ENCODE measurements at regions of chr7 and their contacts with region 1.

Region 1: GRCh38 chr7:143214789-143215679 is 6.8 kb upstream of the TAS2R40 start:
- DNase-seq: peak; percentile 77
- H3K4me3 ChIP-seq: no peak overlapping the region; a peak in 1 of 4 replicates
- H3K27ac ChIP-seq: no peak overlapping the region
- H3K4me1 ChIP-seq: no peaks in the 10 kb centered on the region
- H3K27me3 ChIP-seq: peaks cover 7% of the 10 kb centered on the region; the same call in 1 of the 2 replicates
- CTCF ChIP-seq: peak; percentile 100
- EP300 ChIP-seq: no peak
- RAD21 ChIP-seq: peak; percentile 100

Region 2: GRCh38 chr7:142516038-142516501 is 699.0 kb before region 1 on chr7:
- CTCF ChIA-PET with region 1: interaction called, 12 read pairs
- POLR2A ChIA-PET with region 1: no interaction called
- DNase-seq: peak; percentile 69
- H3K4me3 ChIP-seq: peak overlapping the region in 1 of 2 experiments; percentile 20; a peak in 1 of 4 replicates
- H3K27ac ChIP-seq: no peak overlapping the region; a peak in 1 of 4 replicates
- H3K4me1 ChIP-seq: peaks cover 0 to 18% of the 10 kb centered on the region in 2 experiments; a peak in 2 of 4 replicates
- H3K27me3 ChIP-seq: peaks cover 33% of the 10 kb centered on the region
- CTCF ChIP-seq: peak; percentile 96
- EP300 ChIP-seq: no peak
- RAD21 ChIP-seq: peak; percentile 85

Region 3: GRCh38 chr7:142587578-142588191 is 627.3 kb before region 1 on chr7:
- CTCF ChIA-PET with region 1: no interaction called
- POLR2A ChIA-PET with region 1: no interaction called
- DNase-seq: peak; percentile 31
- H3K4me3 ChIP-seq: no peak overlapping the region; a peak in 1 of 4 replicates
- H3K27ac ChIP-seq: no peak overlapping the region
- H3K4me1 ChIP-seq: peaks cover 0 to 6% of the 10 kb centered on the region in 2 experiments; a peak in 3 of 4 replicates
- H3K27me3 ChIP-seq: no peaks in the 10 kb centered on the region
- CTCF ChIP-seq: peak; percentile 64
- EP300 ChIP-seq: no peak
- RAD21 ChIP-seq: peak; percentile 40; the same call in 1 of the 2 replicates

Region 4: GRCh38 chr7:142853739-142854371 is 361.2 kb before region 1 on chr7:
- CTCF ChIA-PET with region 1: interaction called, 10 read pairs
- POLR2A ChIA-PET with region 1: no interaction called
- DNase-seq: peak; percentile 92
- H3K4me3 ChIP-seq: peak overlapping the region; percentile 61 to 89
- H3K27ac ChIP-seq: no peak overlapping the region; a peak in 1 of 4 replicates
- H3K4me1 ChIP-seq: peaks cover 0 to 14% of the 10 kb centered on the region in 2 experiments; a peak in 1 of 4 replicates
- H3K27me3 ChIP-seq: peaks cover 42% of the 10 kb centered on the region; the same call in 1 of the 2 replicates
- CTCF ChIP-seq: peak; percentile 96
- EP300 ChIP-seq: no peak
- RAD21 ChIP-seq: peak; percentile 81

Region 5: DNA sequence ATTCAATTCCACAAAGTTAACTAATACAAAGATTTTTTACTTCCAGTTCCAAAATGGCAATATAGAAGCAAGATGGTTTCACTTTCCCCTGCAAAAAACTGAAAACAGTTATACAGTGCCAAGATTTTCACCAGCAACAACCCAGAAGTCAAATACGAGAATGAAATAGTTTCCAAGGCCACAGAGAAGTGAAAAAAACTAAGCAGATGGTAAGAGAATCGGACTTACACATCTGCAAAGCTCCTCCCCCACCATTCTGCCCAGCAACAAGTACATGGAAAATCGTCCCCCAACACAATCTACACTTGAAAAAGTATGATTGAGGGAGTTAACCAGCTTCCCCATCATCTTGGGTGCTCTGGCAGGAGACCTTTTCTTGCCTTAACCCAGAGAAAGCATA is 222.6 kb before region 1 on chr7:
- CTCF ChIA-PET with region 1: interaction called, 450 read pairs
- POLR2A ChIA-PET with region 1: no interaction called
- DNase-seq: no peak
- H3K4me3 ChIP-seq: peak overlapping the region; percentile 10 to 48; a peak in 2 of 4 replicates
- H3K27ac ChIP-seq: no peak overlapping the region
- H3K4me1 ChIP-seq: no peaks in the 10 kb centered on the region
- H3K27me3 ChIP-seq: no peaks in the 10 kb centered on the region; the same call in 1 of the 2 replicates
- CTCF ChIP-seq: no peak
- EP300 ChIP-seq: no peak
- RAD21 ChIP-seq: no peak

Region 6: DNA sequence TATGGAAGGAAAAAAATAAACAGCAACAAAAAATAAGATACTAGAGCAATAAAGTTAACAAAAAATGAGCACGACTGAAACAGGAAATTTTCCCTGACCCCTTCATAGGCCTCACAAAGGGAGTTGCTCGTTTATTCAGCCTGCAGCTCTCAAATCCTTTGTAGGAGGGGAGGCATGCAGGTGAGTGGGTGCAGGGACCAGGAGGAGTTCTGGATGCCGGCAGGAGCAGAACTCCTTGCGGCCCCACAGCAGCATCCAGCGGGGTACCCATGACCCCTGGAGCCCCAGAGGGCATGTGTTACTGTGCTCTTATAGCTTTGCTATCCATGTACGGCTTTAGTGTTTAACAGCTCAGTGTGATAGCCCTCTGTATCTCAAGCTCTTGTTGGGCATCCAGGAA is 26.0 kb before region 1 on chr7:
- CTCF ChIA-PET with region 1: interaction called, 24 read pairs
- POLR2A ChIA-PET with region 1: no interaction called
- DNase-seq: no peak
- H3K4me3 ChIP-seq: no peak overlapping the region
- H3K27ac ChIP-seq: no peak overlapping the region
- H3K4me1 ChIP-seq: no peaks in the 10 kb centered on the region
- H3K27me3 ChIP-seq: peaks cover 4% of the 10 kb centered on the region; the same call in 1 of the 2 replicates
- CTCF ChIP-seq: no peak
- EP300 ChIP-seq: no peak
- RAD21 ChIP-seq: no peak

Region 7: GRCh38 chr7:143229054-143229790 is 14.2 kb after region 1 on chr7:
- CTCF ChIA-PET with region 1: interaction called, 33 read pairs
- POLR2A ChIA-PET with region 1: no interaction called
- DNase-seq: peak; percentile 17
- H3K4me3 ChIP-seq: no peak overlapping the region
- H3K27ac ChIP-seq: no peak overlapping the region
- H3K4me1 ChIP-seq: peaks cover 2 to 4% of the 10 kb centered on the region in 2 experiments; a peak in 2 of 4 replicates
- H3K27me3 ChIP-seq: peaks cover 6% of the 10 kb centered on the region; the same call in 1 of the 2 replicates
- CTCF ChIP-seq: no peak
- EP300 ChIP-seq: no peak
- RAD21 ChIP-seq: no peak